B cell (primary cell): ENCODE measurements at regions of chr5 and their contacts with region 1.

Region 1: GRCh38 chr5:134527146-134527960 is 1.9 kb downstream of the JADE2 start:
- DNase-seq: peak; percentile 82
- ATAC-seq: peak; percentile 26
- H3K4me3 ChIP-seq: peak overlapping the region; percentile 70 to 100 (median 98)
- H3K4me3 Mint-ChIP-seq: peak overlapping the region; percentile 99
- H3K27ac ChIP-seq: peak overlapping the region; percentile 54 to 99
- H3K27ac Mint-ChIP-seq: peak overlapping the region; percentile 99
- H3K4me1 ChIP-seq: peaks cover 34 to 53% of the 10 kb centered on the region in 2 donors
- H3K4me1 Mint-ChIP-seq: peaks cover 57% of the 10 kb centered on the region
- H3K27me3 ChIP-seq: no peaks in the 10 kb centered on the region
- H3K27me3 Mint-ChIP-seq: no peaks in the 10 kb centered on the region
- CTCF ChIP-seq: peak; percentile 80

Region 2: GRCh38 chr5:134176511-134177368 is 350.6 kb before region 1 on chr5 and contains the start of gene SKP1:
- CTCF ChIA-PET with region 1: no interaction called
- POLR2A ChIA-PET with region 1: interaction called, 4 read pairs
- intact Hi-C with region 1: loop called (anchors 2 kb)
- DNase-seq: peak; percentile 95
- ATAC-seq: peak; percentile 86
- H3K4me3 ChIP-seq: peak within 1 kb of the TSS; percentile 73 to 100 (median 93)
- H3K4me3 Mint-ChIP-seq: peak within 1 kb of the TSS; percentile 96
- H3K27ac ChIP-seq: peak within 1 kb of the TSS; percentile 98 to 100
- H3K27ac Mint-ChIP-seq: peak within 1 kb of the TSS; percentile 98
- H3K4me1 ChIP-seq: peaks cover 25 to 27% of the 10 kb centered on the region in 2 donors
- H3K4me1 Mint-ChIP-seq: peaks cover 29% of the 10 kb centered on the region
- H3K27me3 ChIP-seq: no peaks in the 10 kb centered on the region
- H3K27me3 Mint-ChIP-seq: no peaks in the 10 kb centered on the region
- CTCF ChIP-seq: no peak
- total RNA-seq, gene SKP1: 182 and 186 TPM in 2 replicates

Region 3: DNA sequence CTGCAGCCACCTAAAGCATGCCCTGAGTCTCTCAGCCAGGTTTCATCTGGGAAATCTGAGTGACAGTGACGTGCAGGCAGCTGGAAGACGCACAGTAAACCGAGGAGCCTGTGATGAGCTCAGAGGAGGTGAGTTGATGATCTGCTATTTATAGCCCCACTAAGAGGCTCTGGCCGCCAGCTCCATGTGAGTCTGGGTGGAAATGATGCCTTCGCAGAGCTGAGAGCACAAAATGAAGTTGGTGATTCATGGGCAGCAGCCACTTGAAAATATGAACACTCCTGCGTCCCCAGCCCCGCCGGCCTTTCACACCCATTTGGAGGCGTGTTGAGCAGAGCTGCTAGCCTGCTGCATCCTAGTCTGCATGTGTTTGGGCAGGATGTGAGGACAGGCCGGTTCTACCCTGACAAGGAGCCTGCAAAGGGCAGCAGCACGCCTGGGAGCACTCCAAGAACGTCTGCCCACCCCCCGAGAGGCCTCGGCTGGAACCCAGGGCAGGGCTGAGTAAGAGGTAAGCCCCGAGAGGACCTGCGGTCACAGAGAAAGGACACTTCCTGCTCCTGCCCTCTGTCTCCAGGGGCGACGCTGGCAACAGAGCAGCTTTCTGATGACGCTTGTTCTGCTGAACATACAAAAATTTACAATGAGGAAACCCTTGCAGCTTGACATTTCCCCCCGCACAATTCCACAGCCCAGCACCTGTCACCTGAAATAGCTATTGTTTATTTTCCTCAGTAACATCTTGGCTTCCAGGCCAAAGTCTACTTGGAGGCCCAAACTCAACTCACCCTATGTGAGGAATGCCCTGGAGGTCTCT is 90.6 kb before region 1 on chr5:
- CTCF ChIA-PET with region 1: interaction called, 3 read pairs
- POLR2A ChIA-PET with region 1: interaction called, 25 read pairs
- intact Hi-C with region 1: loop called (anchors 1 kb)
- DNase-seq: peak; percentile 76
- ATAC-seq: peak; percentile 96
- H3K4me3 ChIP-seq: peak overlapping the region in 2 of 5 experiments; percentile 18 to 44
- H3K4me3 Mint-ChIP-seq: peak overlapping the region; percentile 53
- H3K27ac ChIP-seq: peak overlapping the region; percentile 43 to 64
- H3K27ac Mint-ChIP-seq: peak overlapping the region; percentile 70
- H3K4me1 ChIP-seq: peaks cover 12 to 17% of the 10 kb centered on the region in 2 donors
- H3K4me1 Mint-ChIP-seq: peaks cover 30% of the 10 kb centered on the region
- H3K27me3 ChIP-seq: peaks cover 0 to 3% (median 0%) of the 10 kb centered on the region in 4 experiments
- H3K27me3 Mint-ChIP-seq: no peaks in the 10 kb centered on the region
- CTCF ChIP-seq: no peak

Region 4: DNA sequence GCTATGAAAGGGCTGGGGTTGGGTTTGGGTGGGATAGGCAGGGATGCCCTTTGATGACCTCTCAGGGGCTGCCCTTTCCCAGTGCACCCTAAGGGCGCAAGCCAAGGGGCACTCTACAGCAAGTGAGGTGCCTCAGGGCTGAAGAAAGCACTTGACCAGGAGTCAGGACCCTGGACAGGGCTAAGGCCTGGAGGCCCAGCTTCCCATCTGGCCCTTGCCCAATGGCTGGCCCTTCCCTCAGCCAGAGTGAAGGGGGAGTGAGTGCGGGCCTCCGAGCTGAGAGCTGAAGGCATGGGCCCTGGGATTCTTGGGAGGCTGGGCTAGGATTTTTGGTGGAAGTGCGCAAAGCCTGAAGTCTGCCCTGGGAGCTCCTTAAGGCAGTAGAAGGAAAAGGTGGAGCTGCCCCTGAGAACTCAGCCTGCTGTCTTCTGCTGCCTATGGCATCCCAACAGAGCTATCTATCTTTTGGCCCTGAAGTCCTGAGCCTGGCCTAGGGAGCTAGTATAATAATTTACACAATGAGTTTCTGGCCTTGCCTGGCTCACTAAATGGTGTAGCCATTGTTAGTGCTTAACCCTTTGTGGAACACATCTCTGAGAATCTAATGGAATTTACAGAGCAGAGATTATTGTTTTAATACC is 14.5 kb after region 1 on chr5:
- CTCF ChIA-PET with region 1: interaction called, 122 read pairs
- POLR2A ChIA-PET with region 1: interaction called, 86 read pairs
- intact Hi-C with region 1: loop called (anchors 1 kb)
- DNase-seq: no peak
- ATAC-seq: no peak
- H3K4me3 ChIP-seq: no peak overlapping the region
- H3K4me3 Mint-ChIP-seq: peak overlapping the region; percentile 78
- H3K27ac ChIP-seq: peak overlapping the region; percentile 87 to 95
- H3K27ac Mint-ChIP-seq: peak overlapping the region; percentile 91
- H3K4me1 ChIP-seq: peaks cover 74 to 75% of the 10 kb centered on the region in 2 donors
- H3K4me1 Mint-ChIP-seq: peaks cover 70% of the 10 kb centered on the region
- H3K27me3 ChIP-seq: no peaks in the 10 kb centered on the region
- H3K27me3 Mint-ChIP-seq: no peaks in the 10 kb centered on the region
- CTCF ChIP-seq: no peak

Region 5: GRCh38 chr5:134586866-134587524 is 59.6 kb after region 1 on chr5:
- CTCF ChIA-PET with region 1: interaction called, 11 read pairs
- POLR2A ChIA-PET with region 1: interaction called, 3 read pairs
- intact Hi-C with region 1: no loop called
- DNase-seq: peak; percentile 82
- ATAC-seq: peak; percentile 89
- H3K4me3 ChIP-seq: peak overlapping the region in 1 of 5 experiments; percentile 33
- H3K4me3 Mint-ChIP-seq: peak overlapping the region; percentile 49
- H3K27ac ChIP-seq: no peak overlapping the region
- H3K27ac Mint-ChIP-seq: no peak overlapping the region
- H3K4me1 ChIP-seq: peaks cover 3 to 5% of the 10 kb centered on the region in 2 donors
- H3K4me1 Mint-ChIP-seq: peaks cover 21% of the 10 kb centered on the region
- H3K27me3 ChIP-seq: no peaks in the 10 kb centered on the region
- H3K27me3 Mint-ChIP-seq: no peaks in the 10 kb centered on the region
- CTCF ChIP-seq: peak; percentile 86